Left cardiac atrium (tissue), 4 donors: ENCODE measurements at regions of chr17 and their contacts with region 1.

Region 1: GRCh38 chr17:75589012-75589918 is 1.7 kb downstream of the MYO15B start:
- DNase-seq: peak; percentile 97
- ATAC-seq: peak; percentile 89 to 91

Region 2: GRCh38 chr17:75524953-75525719 is 64.1 kb before region 1 on chr17 and contains the start of gene LLGL2:
- intact Hi-C with region 1: loop called in 1 of 2 experiments (anchors 5 kb)
- DNase-seq: peak; percentile 76
- ATAC-seq: peak; percentile 93 to 96
- total RNA-seq, gene LLGL2: 6.8 to 8.7 TPM